Ascending aorta (tissue), 2 donors: ENCODE measurements at regions of chr11 and their contacts with region 1.

Region 1: DNA sequence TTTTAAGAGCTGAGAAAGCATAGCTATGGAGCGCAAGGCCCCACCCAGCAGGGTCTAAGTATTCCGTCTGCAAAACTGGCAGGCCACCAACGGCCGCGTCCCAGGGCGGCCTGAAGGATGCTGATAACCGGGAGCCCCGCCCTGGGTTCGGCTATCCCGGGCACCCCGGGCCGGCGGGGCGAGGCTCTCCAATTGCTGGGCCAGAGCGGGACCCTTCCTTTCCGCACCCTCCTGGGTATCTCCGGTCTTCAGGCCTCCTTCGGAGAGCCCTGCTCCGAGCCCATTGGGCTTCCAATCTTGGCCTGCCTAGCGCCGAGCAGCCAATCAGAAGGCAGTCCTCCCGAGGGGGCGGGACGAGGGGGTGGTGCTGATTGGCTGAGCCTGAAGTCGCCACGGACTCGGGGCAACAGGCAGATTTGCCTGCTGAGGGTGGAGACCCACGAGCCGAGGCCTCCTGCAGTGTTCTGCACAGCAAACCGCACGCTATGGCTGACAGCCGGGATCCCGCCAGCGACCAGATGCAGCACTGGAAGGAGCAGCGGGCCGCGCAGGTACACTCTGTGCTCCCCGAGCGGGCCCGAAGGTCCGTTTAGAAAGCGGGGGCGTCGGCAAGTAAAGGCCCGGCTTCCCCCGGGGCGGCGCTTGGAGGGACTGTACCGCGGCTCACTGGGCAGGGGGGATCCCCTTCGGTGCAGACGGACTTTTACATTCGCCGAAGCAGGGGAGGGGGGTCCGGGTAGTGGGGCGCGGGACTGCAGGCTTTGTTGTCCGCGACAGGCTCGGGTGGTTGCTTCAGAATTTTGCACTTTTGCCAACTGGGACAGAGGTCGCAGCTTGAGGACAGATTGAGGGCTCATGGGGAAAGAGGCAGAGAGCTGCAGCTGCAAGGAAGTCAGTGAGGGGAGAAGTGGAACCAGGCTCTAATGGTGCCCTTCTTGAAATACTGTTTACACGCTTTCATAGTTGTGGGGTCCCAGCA is at the start of gene CAT:
- DNase-seq: peak; percentile 92 to 98
- H3K4me3 ChIP-seq: peak within 1 kb of the TSS; percentile 87 to 88
- H3K27ac ChIP-seq: peak within 1 kb of the TSS; percentile 79 to 84
- H3K4me1 ChIP-seq: peaks cover 5 to 15% of the 10 kb centered on the region in 2 donors
- H3K27me3 ChIP-seq: no peaks in the 10 kb centered on the region
- CTCF ChIP-seq: no peak
- total RNA-seq, gene CAT: 69.2 TPM

Region 2: DNA sequence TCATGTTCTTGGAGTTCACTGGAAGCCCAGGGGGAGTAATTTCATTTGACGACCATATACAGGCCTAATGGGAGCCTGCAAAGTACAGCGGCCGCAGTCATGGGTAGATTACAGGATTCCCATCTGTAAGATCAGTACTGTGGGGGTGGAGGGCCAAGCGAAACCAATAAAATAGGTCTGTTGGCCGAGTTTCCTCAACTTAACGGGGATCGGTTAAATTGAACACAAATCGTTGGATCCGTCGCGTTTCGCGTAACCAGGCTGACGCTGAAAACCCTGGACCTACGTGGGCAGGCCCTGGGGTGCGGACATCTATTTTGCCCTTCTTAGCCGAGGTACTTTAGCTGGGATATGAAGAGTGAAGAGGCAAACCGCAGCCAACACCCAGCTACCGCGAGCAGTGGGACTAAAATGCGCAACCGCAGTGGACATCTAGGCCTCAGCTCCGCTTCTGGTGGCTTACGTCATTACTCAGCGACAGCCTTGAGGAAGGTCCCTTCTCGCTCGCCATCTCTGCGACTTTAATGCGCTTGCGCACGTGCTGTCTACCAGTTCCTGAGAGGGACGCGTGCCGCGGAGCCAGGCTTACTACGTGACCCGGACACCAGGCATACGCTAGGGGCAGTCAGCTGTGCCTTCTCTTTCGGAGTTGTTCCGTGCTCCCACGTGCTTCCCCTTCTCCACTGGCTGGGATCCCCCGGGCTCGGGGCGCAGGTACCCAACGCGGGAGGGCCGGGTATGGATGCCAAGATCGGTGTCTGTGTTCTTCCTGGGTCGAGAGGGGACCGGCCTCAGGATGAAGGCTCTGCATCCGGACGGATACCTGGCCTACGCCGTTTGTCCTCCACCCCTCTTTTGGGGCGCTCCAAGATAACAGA is 333.5 kb before region 1 on chr11 and contains the start of gene NAT10:
- intact Hi-C with region 1: loop called (anchors 5 kb)
- DNase-seq: peak; percentile 93 to 99
- H3K4me3 ChIP-seq: peak within 1 kb of the TSS; percentile 82 to 86
- H3K27ac ChIP-seq: peak within 1 kb of the TSS; percentile 93 to 95
- H3K4me1 ChIP-seq: peaks cover 4 to 5% of the 10 kb centered on the region in 2 donors
- H3K27me3 ChIP-seq: no peaks in the 10 kb centered on the region
- CTCF ChIP-seq: no peak
- total RNA-seq, gene NAT10: 11.3 TPM

Region 3: GRCh38 chr11:34174412-34175041 is 264.3 kb before region 1 on chr11:
- intact Hi-C with region 1: loop called (anchors 5 kb)
- DNase-seq: peak in 1 of 2 donors; percentile 89
- H3K4me3 ChIP-seq: peak overlapping the region; percentile 47 to 58
- H3K27ac ChIP-seq: peak overlapping the region; percentile 13 to 31
- H3K4me1 ChIP-seq: peaks cover 5 to 7% of the 10 kb centered on the region in 2 donors
- H3K27me3 ChIP-seq: no peaks in the 10 kb centered on the region
- CTCF ChIP-seq: peak; percentile 95 to 99 (median 99)

Region 4: GRCh38 chr11:34266090-34266912 is 172.5 kb before region 1 on chr11:
- intact Hi-C with region 1: loop called (anchors 10 kb)
- DNase-seq: peak in 1 of 2 donors; percentile 83
- H3K4me3 ChIP-seq: peak overlapping the region in 1 of 2 donors; percentile 3
- H3K27ac ChIP-seq: peak overlapping the region; percentile 61 to 67
- H3K4me1 ChIP-seq: peaks cover 3 to 37% of the 10 kb centered on the region in 2 donors
- H3K27me3 ChIP-seq: no peaks in the 10 kb centered on the region
- CTCF ChIP-seq: no peak

Region 5: GRCh38 chr11:34773826-34774225 is 335.0 kb after region 1 on chr11:
- intact Hi-C with region 1: no loop called
- DNase-seq: no peak
- H3K4me3 ChIP-seq: no peak overlapping the region
- H3K27ac ChIP-seq: no peak overlapping the region
- H3K4me1 ChIP-seq: no peaks in the 10 kb centered on the region
- H3K27me3 ChIP-seq: no peaks in the 10 kb centered on the region
- CTCF ChIP-seq: no peak

Region 6: GRCh38 chr11:34791780-34792542 is 353.1 kb after region 1 on chr11:
- intact Hi-C with region 1: no loop called
- DNase-seq: no peak
- H3K4me3 ChIP-seq: no peak overlapping the region
- H3K27ac ChIP-seq: no peak overlapping the region
- H3K4me1 ChIP-seq: no peaks in the 10 kb centered on the region
- H3K27me3 ChIP-seq: no peaks in the 10 kb centered on the region
- CTCF ChIP-seq: no peak